ENCODE measurements at regions of chr17 and their contacts with region 1.

Region 1: GRCh38 chr17:3913531-3914311 is 2.5 kb downstream of the P2RX1 start:
- DNase-seq: peak; percentile 91
- ATAC-seq: peak; percentile 92
- H3K4me3 Mint-ChIP-seq: no peak overlapping the region
- H3K27ac Mint-ChIP-seq: no peak overlapping the region
- H3K4me1 Mint-ChIP-seq: no peaks in the 10 kb centered on the region; the same call in 1 of the 2 replicates
- H3K27me3 Mint-ChIP-seq: peaks cover 3% of the 10 kb centered on the region; the same call in 1 of the 2 replicates
- CTCF ChIP-seq: peak; percentile 98

Region 2: DNA sequence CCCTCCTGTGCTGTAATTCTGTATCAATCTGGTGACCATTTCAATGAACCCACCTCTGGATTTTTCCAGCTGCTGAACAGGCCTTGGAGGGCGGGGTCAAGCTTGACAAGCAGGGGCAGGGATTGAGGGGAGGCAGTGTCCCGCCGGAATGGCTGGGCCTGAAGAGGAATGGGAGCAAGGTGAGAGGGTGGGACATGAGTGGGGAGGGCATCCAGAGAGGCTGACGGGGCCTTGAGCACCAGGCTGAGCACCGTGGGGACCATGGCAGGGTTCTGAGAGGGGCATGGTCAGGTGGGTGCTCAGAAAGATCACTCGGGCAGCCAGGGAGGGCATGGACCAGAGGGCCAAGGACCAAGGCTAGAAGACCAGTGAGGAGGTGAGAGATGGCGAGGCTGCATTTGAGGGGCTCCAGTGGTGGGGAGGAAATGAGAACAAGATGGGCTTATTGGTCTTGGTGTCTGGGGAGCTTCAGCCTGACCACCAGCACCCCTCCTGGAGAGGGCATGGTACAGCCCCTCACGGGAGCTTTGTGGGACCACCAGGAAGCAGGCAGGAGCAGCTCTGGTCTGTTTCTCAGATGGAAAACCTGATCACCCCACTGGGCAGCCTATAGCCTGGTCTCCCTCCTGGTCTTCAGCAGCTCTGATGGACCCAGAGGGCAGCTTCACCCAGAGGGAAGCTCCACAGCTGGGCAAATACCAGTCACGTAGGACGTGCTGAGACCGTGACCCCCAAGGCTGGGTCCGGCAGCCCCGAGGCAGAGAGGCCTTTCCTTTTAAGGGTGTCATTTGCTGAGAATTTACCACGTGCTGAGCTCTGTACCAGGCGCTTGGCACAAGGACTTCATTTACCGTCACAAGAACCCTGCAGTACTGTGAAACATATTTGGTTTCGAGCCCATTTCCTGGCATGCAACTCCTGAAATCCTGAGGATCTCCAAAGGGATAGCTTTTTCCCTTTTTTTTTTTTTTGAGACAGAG is 56.3 kb before region 1 on chr17:
- CTCF ChIA-PET with region 1: interaction called, 12 read pairs
- POLR2A ChIA-PET with region 1: no interaction called
- DNase-seq: no peak
- ATAC-seq: peak; percentile 57
- H3K4me3 Mint-ChIP-seq: no peak overlapping the region
- H3K27ac Mint-ChIP-seq: no peak overlapping the region
- H3K4me1 Mint-ChIP-seq: no peaks in the 10 kb centered on the region
- H3K27me3 Mint-ChIP-seq: no peaks in the 10 kb centered on the region; the same call in 1 of the 2 replicates
- CTCF ChIP-seq: no peak

Region 3: GRCh38 chr17:3929764-3930163 is 16.0 kb after region 1 on chr17:
- CTCF ChIA-PET with region 1: interaction called, 20 read pairs
- POLR2A ChIA-PET with region 1: no interaction called
- DNase-seq: no peak
- ATAC-seq: no peak
- H3K4me3 Mint-ChIP-seq: no peak overlapping the region
- H3K27ac Mint-ChIP-seq: no peak overlapping the region
- H3K4me1 Mint-ChIP-seq: peaks cover 5% of the 10 kb centered on the region; the same call in 1 of the 2 replicates
- H3K27me3 Mint-ChIP-seq: no peaks in the 10 kb centered on the region
- CTCF ChIP-seq: no peak

Region 4: GRCh38 chr17:3965118-3965803 is 51.5 kb after region 1 on chr17:
- CTCF ChIA-PET with region 1: interaction called, 26 read pairs
- POLR2A ChIA-PET with region 1: no interaction called
- DNase-seq: peak; percentile 78
- ATAC-seq: peak; percentile 85
- H3K4me3 Mint-ChIP-seq: peak overlapping the region; percentile 79
- H3K27ac Mint-ChIP-seq: peak overlapping the region; percentile 92; the same call in 1 of the 2 replicates
- H3K4me1 Mint-ChIP-seq: peaks cover 32% of the 10 kb centered on the region
- H3K27me3 Mint-ChIP-seq: peaks cover 12% of the 10 kb centered on the region
- CTCF ChIP-seq: no peak

Region 5: GRCh38 chr17:3998436-3998835 is 84.7 kb after region 1 on chr17:
- CTCF ChIA-PET with region 1: interaction called, 17 read pairs
- POLR2A ChIA-PET with region 1: no interaction called
- DNase-seq: no peak
- ATAC-seq: no peak
- H3K4me3 Mint-ChIP-seq: no peak overlapping the region
- H3K27ac Mint-ChIP-seq: no peak overlapping the region
- H3K4me1 Mint-ChIP-seq: peaks cover 6% of the 10 kb centered on the region
- H3K27me3 Mint-ChIP-seq: no peaks in the 10 kb centered on the region
- CTCF ChIP-seq: no peak

Region 6: GRCh38 chr17:4017377-4017776 is 103.7 kb after region 1 on chr17:
- CTCF ChIA-PET with region 1: interaction called, 11 read pairs
- POLR2A ChIA-PET with region 1: no interaction called
- DNase-seq: peak; percentile 52
- ATAC-seq: peak; percentile 72
- H3K4me3 Mint-ChIP-seq: no peak overlapping the region
- H3K27ac Mint-ChIP-seq: no peak overlapping the region
- H3K4me1 Mint-ChIP-seq: no peaks in the 10 kb centered on the region
- H3K27me3 Mint-ChIP-seq: no peaks in the 10 kb centered on the region
- CTCF ChIP-seq: no peak

Region 7: DNA sequence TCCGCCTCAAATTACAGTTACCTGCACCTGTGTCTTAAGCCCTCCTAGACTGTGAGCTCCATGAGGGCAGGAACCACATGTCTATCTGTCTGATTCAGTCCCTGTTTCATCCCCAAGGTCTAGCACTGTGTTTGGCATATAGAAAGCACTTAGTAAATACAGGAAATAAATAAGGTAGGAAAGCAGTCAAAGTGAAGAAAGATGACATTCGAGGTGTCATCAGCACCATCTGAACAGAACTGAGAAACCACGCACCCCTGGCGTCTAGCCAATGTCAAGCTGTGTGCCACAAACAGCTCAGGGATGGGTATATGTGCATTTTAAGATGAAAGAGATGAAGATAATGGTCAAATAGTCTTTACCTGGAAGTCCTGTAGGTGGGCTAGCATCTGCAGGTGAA is 130.1 kb after region 1 on chr17:
- CTCF ChIA-PET with region 1: no interaction called
- POLR2A ChIA-PET with region 1: no interaction called
- DNase-seq: no peak
- ATAC-seq: no peak
- H3K4me3 Mint-ChIP-seq: no peak overlapping the region
- H3K27ac Mint-ChIP-seq: no peak overlapping the region
- H3K4me1 Mint-ChIP-seq: no peaks in the 10 kb centered on the region
- H3K27me3 Mint-ChIP-seq: no peaks in the 10 kb centered on the region
- CTCF ChIP-seq: no peak

Region 8: DNA sequence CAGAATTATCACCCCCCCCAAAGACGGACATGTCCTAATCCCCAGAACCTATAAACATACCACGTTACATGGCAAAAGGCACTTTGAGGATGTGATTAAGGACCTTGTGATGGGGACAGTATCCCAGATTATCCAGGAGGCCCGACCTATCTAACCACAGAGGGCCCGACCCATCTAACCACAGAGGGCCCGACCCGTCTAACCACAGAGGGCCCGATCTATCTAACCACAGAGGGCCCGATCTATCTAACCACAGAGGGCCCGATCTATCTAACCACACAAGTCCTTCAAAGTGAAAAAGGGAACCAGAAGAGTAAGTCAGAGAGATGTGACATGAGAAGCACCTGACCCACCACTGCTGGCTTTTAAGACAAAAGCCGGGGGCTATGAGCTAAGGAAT is 293.2 kb after region 1 on chr17:
- CTCF ChIA-PET with region 1: no interaction called
- POLR2A ChIA-PET with region 1: no interaction called
- DNase-seq: no peak
- ATAC-seq: no peak
- H3K4me3 Mint-ChIP-seq: no peak overlapping the region
- H3K27ac Mint-ChIP-seq: no peak overlapping the region
- H3K4me1 Mint-ChIP-seq: no peaks in the 10 kb centered on the region
- H3K27me3 Mint-ChIP-seq: no peaks in the 10 kb centered on the region
- CTCF ChIP-seq: no peak